HCT116 (cell line): ENCODE measurements at regions of chr14 and their contacts with region 1.

Region 1: GRCh38 chr14:33938131-33938949 is 12.5 kb downstream of the EGLN3 start:
- DNase-seq: peak; percentile 76
- ATAC-seq: peak; percentile 97
- H3K4me3 ChIP-seq: peak overlapping the region; percentile 40 to 58
- H3K27ac ChIP-seq: peak overlapping the region; percentile 48
- H3K4me1 ChIP-seq: peaks cover 11 to 38% of the 10 kb centered on the region in 2 experiments
- H3K27me3 ChIP-seq: no peaks in the 10 kb centered on the region
- CTCF ChIP-seq: no peak
- POLR2A ChIP-seq: no peak
- RAD21 ChIP-seq: peak; percentile 9; the same call in 1 of the 2 replicates

Region 2: GRCh38 chr14:34051966-34052657 is 113.8 kb after region 1 on chr14:
- CTCF ChIA-PET with region 1: no interaction called
- POLR2A ChIA-PET with region 1: no interaction called
- RAD21 ChIA-PET with region 1: no interaction called
- intact Hi-C with region 1: loop called (anchors 5 kb)
- DNase-seq: peak; percentile 88
- ATAC-seq: peak; percentile 85
- H3K4me3 ChIP-seq: peak overlapping the region in 1 of 2 experiments; percentile 40; a peak in 2 of 4 replicates
- H3K27ac ChIP-seq: peak overlapping the region; percentile 69
- H3K4me1 ChIP-seq: peaks cover 30 to 41% of the 10 kb centered on the region in 2 experiments
- H3K27me3 ChIP-seq: no peaks in the 10 kb centered on the region
- CTCF ChIP-seq: no peak
- POLR2A ChIP-seq: no peak
- RAD21 ChIP-seq: peak; percentile 37

Region 3: DNA sequence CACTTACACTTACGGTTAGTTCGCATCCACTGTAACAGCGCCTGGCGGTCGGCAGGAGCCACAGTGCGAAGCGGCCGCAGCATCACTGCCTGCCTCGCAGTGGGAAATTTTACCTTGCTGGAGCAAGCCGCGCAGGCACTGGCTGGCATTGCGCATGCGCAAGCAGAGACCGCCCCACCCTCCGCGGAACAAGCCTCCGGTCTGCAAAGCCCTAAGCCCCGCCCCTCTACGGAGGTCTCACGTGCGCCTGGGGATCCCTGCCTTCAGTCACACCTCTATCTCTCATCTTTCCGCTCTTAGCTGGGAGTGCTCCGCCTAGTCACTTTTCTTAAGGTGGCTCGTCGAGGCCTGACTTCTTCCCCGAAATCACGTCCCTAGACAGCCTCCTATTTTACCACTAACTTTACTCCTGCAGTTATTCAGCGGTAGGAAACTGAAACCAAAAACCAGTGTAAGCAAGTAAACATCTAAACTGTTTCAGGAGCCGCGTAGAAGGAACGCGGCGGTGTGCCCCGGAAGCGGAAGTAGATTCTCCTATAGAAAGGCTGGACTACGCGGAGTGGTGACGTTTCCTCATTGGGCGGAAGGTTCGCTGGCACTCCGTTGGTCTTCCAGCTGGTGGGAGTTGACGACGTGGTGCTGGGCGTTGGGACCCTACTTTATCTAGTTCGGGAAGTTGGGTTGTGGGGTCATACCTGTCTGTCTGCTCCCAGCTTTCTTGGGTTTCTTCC is 1044.2 kb after region 1 on chr14 and contains the start of gene SRP54:
- CTCF ChIA-PET with region 1: no interaction called
- POLR2A ChIA-PET with region 1: no interaction called
- RAD21 ChIA-PET with region 1: no interaction called
- intact Hi-C with region 1: no loop called
- DNase-seq: peak; percentile 97
- ATAC-seq: peak; percentile 88
- H3K4me3 ChIP-seq: peak within 1 kb of the TSS; percentile 76 to 94
- H3K27ac ChIP-seq: peak within 1 kb of the TSS; percentile 91
- H3K4me1 ChIP-seq: peaks cover 11 to 17% of the 10 kb centered on the region in 2 experiments; a peak in 3 of 4 replicates
- H3K27me3 ChIP-seq: no peaks in the 10 kb centered on the region
- CTCF ChIP-seq: peak in 1 of 3 experiments; percentile 27; a peak in 1 of 6 replicates
- POLR2A ChIP-seq: peak; percentile 91
- RAD21 ChIP-seq: no peak
- total RNA-seq, gene SRP54: 53.0 TPM